ENCODE measurements at regions of chr16 and their contacts with region 1.

Region 1: GRCh38 chr16:46883690-46884512 is at the start of gene GPT2:
- DNase-seq: peak; percentile 91
- ATAC-seq: peak; percentile 99
- H3K4me3 ChIP-seq: peak within 1 kb of the TSS; percentile 82
- H3K27ac ChIP-seq: peak within 1 kb of the TSS; percentile 59; the same call in 1 of the 2 replicates
- H3K4me1 ChIP-seq: peaks cover 8 to 15% of the 10 kb centered on the region in 2 experiments
- H3K27me3 ChIP-seq: no peaks in the 10 kb centered on the region
- CTCF ChIP-seq: no peak
- POLR2A ChIP-seq: peak; percentile 60
- RAD21 ChIP-seq: no peak
- total RNA-seq, gene GPT2: 50.6 TPM

Region 2: GRCh38 chr16:46743238-46743719 is 140.6 kb before region 1 on chr16:
- CTCF ChIA-PET with region 1: no interaction called
- POLR2A ChIA-PET with region 1: no interaction called
- RAD21 ChIA-PET with region 1: no interaction called
- intact Hi-C with region 1: no loop called
- DNase-seq: no peak
- ATAC-seq: peak; percentile 50; the same call in 1 of the 2 replicates
- H3K4me3 ChIP-seq: no peak overlapping the region
- H3K27ac ChIP-seq: no peak overlapping the region
- H3K4me1 ChIP-seq: no peaks in the 10 kb centered on the region
- H3K27me3 ChIP-seq: no peaks in the 10 kb centered on the region
- CTCF ChIP-seq: no peak
- POLR2A ChIP-seq: no peak
- RAD21 ChIP-seq: no peak

Region 3: GRCh38 chr16:46859719-46860152 is 24.2 kb before region 1 on chr16:
- CTCF ChIA-PET with region 1: interaction called, 3 read pairs
- POLR2A ChIA-PET with region 1: no interaction called
- RAD21 ChIA-PET with region 1: no interaction called
- intact Hi-C with region 1: loop called (anchors 1 kb)
- DNase-seq: peak; percentile 83
- ATAC-seq: peak; percentile 93
- H3K4me3 ChIP-seq: 0 out of 4 replicates have a peak overlapping the region, but pooled peaks of 1 of the 2 experiments have one; percentile 26
- H3K27ac ChIP-seq: peak overlapping the region; percentile 31; the same call in 1 of the 2 replicates
- H3K4me1 ChIP-seq: peaks cover 18 to 42% of the 10 kb centered on the region in 2 experiments
- H3K27me3 ChIP-seq: no peaks in the 10 kb centered on the region
- CTCF ChIP-seq: no peak
- POLR2A ChIP-seq: no peak
- RAD21 ChIP-seq: no peak

Region 4: DNA sequence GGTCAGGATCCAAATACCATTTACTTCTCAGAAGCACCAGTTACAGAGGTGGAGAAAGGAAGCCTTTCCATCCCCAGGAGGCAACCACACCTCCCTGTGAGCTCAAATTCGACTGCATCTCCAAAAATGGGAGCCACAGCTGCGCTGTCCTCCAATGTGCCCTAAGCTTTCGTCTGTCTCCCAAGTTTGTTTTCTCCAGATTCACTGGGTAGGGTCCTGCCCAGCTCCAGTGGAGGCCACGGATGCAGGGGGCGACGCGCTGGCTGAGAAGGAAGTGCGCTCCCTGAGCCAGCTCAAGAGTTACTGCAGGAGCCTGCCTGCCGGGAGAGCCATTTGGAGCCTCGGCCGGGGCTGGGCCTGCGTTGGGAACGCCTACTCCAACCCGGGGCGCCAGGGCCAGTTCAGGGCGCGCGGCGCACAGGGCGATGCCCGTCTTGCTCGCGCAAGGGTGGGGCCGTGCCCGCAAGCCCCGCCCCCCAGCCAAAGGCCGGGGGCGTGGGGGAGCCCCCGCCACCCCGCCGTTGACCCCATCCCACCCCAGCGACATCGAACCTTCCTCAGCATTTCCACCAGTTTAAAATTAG is 1481.8 kb after region 1 on chr16:
- CTCF ChIA-PET with region 1: no interaction called
- POLR2A ChIA-PET with region 1: no interaction called
- RAD21 ChIA-PET with region 1: no interaction called
- intact Hi-C with region 1: no loop called
- DNase-seq: peak; percentile 77
- ATAC-seq: peak; percentile 100
- H3K4me3 ChIP-seq: peak overlapping the region; percentile 51 to 64
- H3K27ac ChIP-seq: peak overlapping the region; percentile 51
- H3K4me1 ChIP-seq: peaks cover 25 to 31% of the 10 kb centered on the region in 2 experiments
- H3K27me3 ChIP-seq: no peaks in the 10 kb centered on the region
- CTCF ChIP-seq: no peak
- POLR2A ChIP-seq: peak; percentile 55
- RAD21 ChIP-seq: no peak